ENCODE measurements at regions of chr19 and their contacts with region 1.

Region 1: GRCh38 chr19:47210689-47211316 is 20.2 kb downstream of the BBC3 start:
- DNase-seq: peak; percentile 68 to 83 (median 75)
- H3K4me3 ChIP-seq: no peak overlapping the region
- H3K4me3 Mint-ChIP-seq: peak overlapping the region in 2 of 8 donors; percentile 4 to 48
- H3K27ac ChIP-seq: no peak overlapping the region
- H3K27ac Mint-ChIP-seq: peak overlapping the region; percentile 15 to 89 (median 43)
- H3K4me1 ChIP-seq: peaks cover 12% of the 10 kb centered on the region
- H3K4me1 Mint-ChIP-seq: peaks cover 6 to 15% (median 7%) of the 10 kb centered on the region in 4 donors
- H3K27me3 ChIP-seq: no peaks in the 10 kb centered on the region
- H3K27me3 Mint-ChIP-seq: no peaks in the 10 kb centered on the region

Region 2: DNA sequence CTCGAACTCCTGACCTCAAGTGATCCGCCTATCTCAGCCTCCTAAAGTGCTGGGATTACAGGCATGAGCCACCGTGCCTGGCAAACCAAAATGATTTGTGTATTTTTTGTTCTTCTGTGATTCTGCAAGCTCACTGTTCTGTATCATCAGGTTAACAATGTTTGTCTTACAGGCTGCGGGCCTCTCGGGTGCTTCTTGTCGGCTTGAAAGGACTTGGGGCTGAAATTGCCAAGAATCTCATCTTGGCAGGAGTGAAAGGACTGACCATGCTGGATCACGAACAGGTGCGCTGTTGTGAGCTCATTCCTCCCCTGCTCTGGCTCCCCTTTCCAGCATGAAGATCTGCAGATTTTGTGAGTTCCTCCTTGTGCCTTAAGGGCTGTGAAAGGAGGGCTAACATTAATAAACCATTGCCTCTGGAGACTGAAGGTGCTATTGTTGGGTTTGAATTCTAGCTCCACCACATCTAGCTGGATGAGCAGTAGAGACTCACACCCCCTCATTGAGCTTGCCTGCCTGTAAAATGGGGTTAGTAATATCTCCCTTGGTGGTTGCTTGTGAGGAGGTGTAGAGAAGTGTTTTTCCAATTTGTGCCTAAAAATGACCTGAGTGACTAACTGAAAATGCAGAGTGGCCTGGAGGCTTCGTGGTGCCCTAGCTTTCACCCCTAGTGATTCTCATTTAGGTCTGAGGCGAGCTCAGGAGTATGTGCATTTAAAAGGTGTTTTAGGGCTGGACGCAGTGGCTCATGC is 67.3 kb before region 1 on chr19:
- CTCF ChIA-PET with region 1: interaction called, 93 read pairs
- POLR2A ChIA-PET with region 1: interaction called, 10 read pairs
- intact Hi-C with region 1: no loop called
- DNase-seq: no peak
- H3K4me3 ChIP-seq: no peak overlapping the region
- H3K4me3 Mint-ChIP-seq: no peak overlapping the region
- H3K27ac ChIP-seq: no peak overlapping the region
- H3K27ac Mint-ChIP-seq: peak overlapping the region; percentile 30 to 87 (median 41)
- H3K4me1 ChIP-seq: peaks cover 37% of the 10 kb centered on the region
- H3K4me1 Mint-ChIP-seq: peaks cover 34 to 68% (median 48%) of the 10 kb centered on the region in 4 donors
- H3K27me3 ChIP-seq: no peaks in the 10 kb centered on the region
- H3K27me3 Mint-ChIP-seq: no peaks in the 10 kb centered on the region

Region 3: GRCh38 chr19:47152224-47153017 is 58.4 kb before region 1 on chr19:
- CTCF ChIA-PET with region 1: interaction called, 93 read pairs
- POLR2A ChIA-PET with region 1: interaction called, 17 read pairs
- intact Hi-C with region 1: loop called (anchors 1 kb)
- DNase-seq: no peak
- H3K4me3 ChIP-seq: no peak overlapping the region
- H3K4me3 Mint-ChIP-seq: no peak overlapping the region
- H3K27ac ChIP-seq: no peak overlapping the region
- H3K27ac Mint-ChIP-seq: no peak overlapping the region
- H3K4me1 ChIP-seq: peaks cover 47% of the 10 kb centered on the region
- H3K4me1 Mint-ChIP-seq: peaks cover 26 to 65% (median 43%) of the 10 kb centered on the region in 4 donors
- H3K27me3 ChIP-seq: no peaks in the 10 kb centered on the region
- H3K27me3 Mint-ChIP-seq: no peaks in the 10 kb centered on the region

Region 4: DNA sequence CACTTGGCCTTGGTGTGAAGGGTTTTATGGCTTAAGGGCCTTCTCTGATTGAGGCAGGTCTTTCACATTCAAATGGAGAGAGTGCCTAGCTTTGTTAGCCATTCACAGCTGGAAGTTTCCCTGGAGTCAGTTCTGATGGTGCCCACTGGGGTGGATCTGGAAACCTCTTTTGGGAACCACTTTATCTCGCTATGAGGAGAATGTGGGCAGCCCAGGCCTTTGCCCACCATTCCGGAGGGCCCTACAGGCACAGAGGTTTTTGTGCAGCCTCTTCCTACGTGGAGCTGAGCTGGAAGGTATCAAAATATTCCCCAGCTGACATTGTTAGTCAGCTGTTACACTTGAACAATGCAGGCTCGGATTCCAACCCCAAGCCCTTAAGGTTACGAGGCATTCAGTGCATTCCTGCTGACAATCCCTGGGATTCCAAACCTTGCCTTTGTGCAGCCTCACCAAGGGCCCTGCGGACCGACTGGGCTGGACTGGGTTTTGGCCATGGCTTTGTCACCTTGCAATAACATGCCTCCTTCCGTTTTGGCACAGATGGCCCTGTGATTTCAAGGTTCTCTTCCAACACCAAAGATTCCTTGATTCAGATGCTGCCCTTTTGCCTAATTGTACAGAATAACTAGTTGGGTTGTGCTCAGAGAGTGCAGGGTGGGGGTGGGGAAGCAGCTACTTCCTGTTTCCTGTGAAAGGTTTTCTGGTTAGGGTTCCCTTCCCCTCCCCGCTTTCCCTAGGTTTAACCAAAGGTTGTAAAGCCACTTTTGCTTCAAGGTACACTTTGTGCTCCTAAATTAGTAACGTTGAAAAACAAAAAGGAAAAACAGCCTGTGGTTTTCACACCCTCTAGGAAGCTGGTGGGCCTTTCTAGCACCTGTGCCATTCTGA is 53.1 kb before region 1 on chr19:
- CTCF ChIA-PET with region 1: interaction called, 93 read pairs
- POLR2A ChIA-PET with region 1: interaction called, 16 read pairs
- intact Hi-C with region 1: loop called (anchors 2 kb)
- DNase-seq: peak; percentile 45 to 56 (median 53)
- H3K4me3 ChIP-seq: peak overlapping the region; percentile 17 to 40
- H3K4me3 Mint-ChIP-seq: peak overlapping the region; percentile 62 to 90 (median 84)
- H3K27ac ChIP-seq: peak overlapping the region; percentile 43
- H3K27ac Mint-ChIP-seq: peak overlapping the region; percentile 76 to 98 (median 95)
- H3K4me1 ChIP-seq: peaks cover 75% of the 10 kb centered on the region
- H3K4me1 Mint-ChIP-seq: peaks cover 40 to 74% (median 60%) of the 10 kb centered on the region in 4 donors
- H3K27me3 ChIP-seq: no peaks in the 10 kb centered on the region
- H3K27me3 Mint-ChIP-seq: no peaks in the 10 kb centered on the region

Region 5: GRCh38 chr19:47176627-47177090 is 34.1 kb before region 1 on chr19:
- CTCF ChIA-PET with region 1: interaction called, 28 read pairs
- POLR2A ChIA-PET with region 1: interaction called, 14 read pairs
- intact Hi-C with region 1: no loop called
- DNase-seq: peak; percentile 65 to 79 (median 70)
- H3K4me3 ChIP-seq: peak overlapping the region in 1 of 2 donors; percentile 26
- H3K4me3 Mint-ChIP-seq: peak overlapping the region; percentile 67 to 92 (median 78)
- H3K27ac ChIP-seq: peak overlapping the region; percentile 39
- H3K27ac Mint-ChIP-seq: peak overlapping the region; percentile 88 to 96 (median 91)
- H3K4me1 ChIP-seq: peaks cover 55% of the 10 kb centered on the region
- H3K4me1 Mint-ChIP-seq: peaks cover 42 to 75% (median 54%) of the 10 kb centered on the region in 4 donors
- H3K27me3 ChIP-seq: no peaks in the 10 kb centered on the region
- H3K27me3 Mint-ChIP-seq: no peaks in the 10 kb centered on the region

Region 6: GRCh38 chr19:47256688-47257443 is 46.1 kb after region 1 on chr19:
- CTCF ChIA-PET with region 1: interaction called, 9 read pairs
- POLR2A ChIA-PET with region 1: interaction called, 12 read pairs
- intact Hi-C with region 1: no loop called
- DNase-seq: peak; percentile 97 to 99 (median 98)
- H3K4me3 ChIP-seq: peak overlapping the region; percentile 61 to 62
- H3K4me3 Mint-ChIP-seq: peak overlapping the region; percentile 88 to 98 (median 94)
- H3K27ac ChIP-seq: peak overlapping the region; percentile 76
- H3K27ac Mint-ChIP-seq: peak overlapping the region; percentile 94 to 99 (median 99)
- H3K4me1 ChIP-seq: peaks cover 18% of the 10 kb centered on the region
- H3K4me1 Mint-ChIP-seq: peaks cover 20 to 44% (median 31%) of the 10 kb centered on the region in 4 donors
- H3K27me3 ChIP-seq: no peaks in the 10 kb centered on the region
- H3K27me3 Mint-ChIP-seq: no peaks in the 10 kb centered on the region

Region 7: DNA sequence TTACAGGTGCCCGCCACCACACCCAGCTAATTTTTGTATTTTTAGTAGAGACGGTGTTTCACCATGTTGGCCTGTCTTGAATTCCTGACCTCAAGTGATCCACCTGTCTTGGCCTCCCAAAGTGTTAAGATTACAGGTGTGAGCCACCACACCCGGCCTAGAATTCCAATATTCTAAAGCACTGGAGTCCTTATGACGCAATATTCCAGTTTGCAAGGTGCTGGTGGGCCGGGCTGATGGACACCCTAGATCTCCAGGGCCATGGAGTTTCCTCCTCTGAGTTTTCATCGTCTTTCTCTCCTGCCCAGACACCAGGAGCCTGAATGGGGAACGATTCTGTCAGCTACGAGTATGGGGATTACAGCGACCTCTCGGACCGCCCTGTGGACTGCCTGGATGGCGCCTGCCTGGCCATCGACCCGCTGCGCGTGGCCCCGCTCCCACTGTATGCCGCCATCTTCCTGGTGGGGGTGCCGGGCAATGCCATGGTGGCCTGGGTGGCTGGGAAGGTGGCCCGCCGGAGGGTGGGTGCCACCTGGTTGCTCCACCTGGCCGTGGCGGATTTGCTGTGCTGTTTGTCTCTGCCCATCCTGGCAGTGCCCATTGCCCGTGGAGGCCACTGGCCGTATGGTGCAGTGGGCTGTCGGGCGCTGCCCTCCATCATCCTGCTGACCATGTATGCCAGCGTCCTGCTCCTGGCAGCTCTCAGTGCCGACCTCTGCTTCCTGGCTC is 129.8 kb after region 1 on chr19:
- CTCF ChIA-PET with region 1: no interaction called
- POLR2A ChIA-PET with region 1: no interaction called
- intact Hi-C with region 1: no loop called
- DNase-seq: no peak
- H3K4me3 ChIP-seq: no peak overlapping the region
- H3K4me3 Mint-ChIP-seq: no peak overlapping the region
- H3K27ac ChIP-seq: no peak overlapping the region
- H3K27ac Mint-ChIP-seq: no peak overlapping the region
- H3K4me1 ChIP-seq: peaks cover 16% of the 10 kb centered on the region
- H3K4me1 Mint-ChIP-seq: peaks cover 7 to 20% (median 12%) of the 10 kb centered on the region in 4 donors
- H3K27me3 ChIP-seq: no peaks in the 10 kb centered on the region
- H3K27me3 Mint-ChIP-seq: no peaks in the 10 kb centered on the region

Region 8: GRCh38 chr19:47514869-47515588 is 304.2 kb after region 1 on chr19 and contains the start of gene NAPA:
- CTCF ChIA-PET with region 1: no interaction called
- POLR2A ChIA-PET with region 1: no interaction called
- intact Hi-C with region 1: no loop called
- DNase-seq: peak; percentile 100
- H3K4me3 ChIP-seq: peak within 1 kb of the TSS; percentile 95 to 98
- H3K4me3 Mint-ChIP-seq: peak within 1 kb of the TSS; percentile 97 to 99 (median 98)
- H3K27ac ChIP-seq: peak within 1 kb of the TSS; percentile 97
- H3K27ac Mint-ChIP-seq: peak within 1 kb of the TSS; percentile 97 to 99 (median 98)
- H3K4me1 ChIP-seq: peaks cover 64% of the 10 kb centered on the region
- H3K4me1 Mint-ChIP-seq: peaks cover 50 to 87% (median 66%) of the 10 kb centered on the region in 4 donors
- H3K27me3 ChIP-seq: no peaks in the 10 kb centered on the region
- H3K27me3 Mint-ChIP-seq: no peaks in the 10 kb centered on the region
- total RNA-seq, gene NAPA: 84.1 to 88.1 TPM

Measured in CD4-positive, alpha-beta memory T cell (primary cell).